Mammary epithelial cell (primary cell): ENCODE measurements at regions of chr12 and their contacts with region 1.

Region 1: GRCh38 chr12:67122584-67122983 is 146.6 kb upstream of the CAND1 start:
- DNase-seq: no peak
- H3K4me3 ChIP-seq: no peak overlapping the region
- H3K27ac ChIP-seq: no peak overlapping the region
- H3K4me1 ChIP-seq: no peaks in the 10 kb centered on the region
- H3K27me3 ChIP-seq: no peaks in the 10 kb centered on the region
- CTCF ChIP-seq: no peak

Region 2: GRCh38 chr12:66624806-66625205 is 497.8 kb before region 1 on chr12:
- CTCF ChIA-PET with region 1: no interaction called
- dilution Hi-C with region 1: no loop called
- in situ Hi-C with region 1: no loop called
- intact Hi-C with region 1: no loop called
- DNase-seq: no peak
- H3K4me3 ChIP-seq: no peak overlapping the region
- H3K27ac ChIP-seq: no peak overlapping the region
- H3K4me1 ChIP-seq: peaks cover 15% of the 10 kb centered on the region
- H3K27me3 ChIP-seq: no peaks in the 10 kb centered on the region
- CTCF ChIP-seq: no peak

Region 3: GRCh38 chr12:67002720-67003119 is 119.9 kb before region 1 on chr12:
- CTCF ChIA-PET with region 1: no interaction called
- dilution Hi-C with region 1: no loop called
- in situ Hi-C with region 1: no loop called
- intact Hi-C with region 1: no loop called
- DNase-seq: peak; percentile 44
- H3K4me3 ChIP-seq: no peak overlapping the region
- H3K27ac ChIP-seq: no peak overlapping the region
- H3K4me1 ChIP-seq: no peaks in the 10 kb centered on the region
- H3K27me3 ChIP-seq: no peaks in the 10 kb centered on the region
- CTCF ChIP-seq: no peak

Region 4: DNA sequence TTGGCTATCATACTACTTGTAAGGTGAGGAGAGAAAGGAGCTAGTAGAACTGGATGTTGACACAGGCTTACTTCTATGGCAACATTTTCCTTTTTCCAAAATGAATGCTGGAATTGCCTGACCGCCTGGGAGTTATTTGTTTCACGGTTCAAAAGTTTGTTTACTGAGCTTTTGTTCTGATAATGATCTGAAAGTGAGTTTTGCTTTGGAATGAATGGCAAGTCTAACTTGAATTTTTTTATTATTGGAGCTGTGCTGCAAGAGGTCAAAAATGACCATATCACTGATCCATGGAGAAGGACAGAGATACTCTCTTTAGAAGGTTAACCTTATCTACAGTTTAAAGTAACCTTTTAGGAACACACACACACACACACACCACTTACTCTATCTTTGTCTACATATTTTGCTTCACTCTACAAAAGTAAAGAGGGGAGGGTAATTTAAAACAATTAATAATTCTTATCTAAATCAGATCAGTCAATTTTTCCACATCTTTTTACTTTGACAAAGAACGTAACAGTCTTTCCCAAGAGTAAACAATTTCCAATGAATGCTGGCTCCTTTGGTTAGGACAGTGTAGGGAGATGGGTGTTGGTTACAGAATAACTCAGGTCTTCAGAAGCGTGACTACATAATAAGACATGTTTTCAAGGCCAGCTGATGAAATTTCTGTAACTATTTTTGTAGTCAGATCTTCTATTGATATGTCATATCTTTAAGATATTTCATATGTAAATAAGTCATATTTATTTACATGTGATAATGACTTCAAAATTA is 36.7 kb before region 1 on chr12:
- CTCF ChIA-PET with region 1: no interaction called
- dilution Hi-C with region 1: no loop called
- in situ Hi-C with region 1: no loop called
- intact Hi-C with region 1: loop called (anchors 5 kb)
- DNase-seq: no peak
- H3K4me3 ChIP-seq: no peak overlapping the region
- H3K27ac ChIP-seq: no peak overlapping the region
- H3K4me1 ChIP-seq: peaks cover 23% of the 10 kb centered on the region
- H3K27me3 ChIP-seq: no peaks in the 10 kb centered on the region
- CTCF ChIP-seq: no peak